K562 (cell line): ENCODE measurements at regions of chr9 and their contacts with region 1.

Region 1: DNA sequence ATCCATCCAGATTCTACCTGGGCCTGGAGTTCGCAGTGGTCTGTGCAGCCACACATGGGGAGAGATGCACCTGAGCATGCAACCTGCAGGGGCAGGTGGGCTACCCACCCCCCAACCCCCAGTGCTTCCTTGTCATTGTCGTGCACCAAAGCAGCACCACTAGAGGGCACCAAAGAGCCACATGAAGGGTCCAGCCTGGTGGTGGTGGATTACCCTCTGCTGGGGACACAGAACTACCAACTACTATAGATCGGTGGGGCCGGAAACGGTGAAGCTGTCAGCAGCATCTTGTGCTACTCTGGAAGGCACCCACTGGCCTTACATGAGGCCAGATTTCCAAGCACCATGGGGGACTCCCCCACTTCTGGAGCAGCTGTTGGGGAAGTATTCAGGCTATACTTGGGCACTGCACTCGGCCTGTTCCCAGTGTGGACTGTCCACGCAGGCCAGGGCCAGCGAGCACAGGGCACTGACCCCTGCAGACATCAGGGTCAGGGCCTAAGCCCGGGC is 60.2 kb upstream of the TBC1D2 start:
- DNase-seq: peak; percentile 91 to 95 (median 92)
- ATAC-seq: peak; percentile 87
- H3K4me3 ChIP-seq: no peak overlapping the region
- H3K27ac ChIP-seq: no peak overlapping the region; the same call in 2 of the 3 replicates
- H3K4me1 ChIP-seq: peaks cover 56 to 70% of the 10 kb centered on the region in 2 experiments
- H3K27me3 ChIP-seq: no peaks in the 10 kb centered on the region
- CTCF ChIP-seq: peak; percentile 98 to 99 (median 98)
- EP300 ChIP-seq: peak; percentile 52; the same call in 1 of the 2 replicates
- POLR2A ChIP-seq: no peak
- RAD21 ChIP-seq: peak; percentile 92 to 99

Region 2: GRCh38 chr9:98045234-98046179 is 270.1 kb before region 1 on chr9:
- CTCF ChIA-PET with region 1: no interaction called
- POLR2A ChIA-PET with region 1: no interaction called
- in situ Hi-C with region 1: no loop called
- intact Hi-C with region 1: no loop called
- DNase-seq: peak; percentile 50 to 90 (median 52)
- ATAC-seq: peak; percentile 87
- H3K4me3 ChIP-seq: peak overlapping the region; percentile 55
- H3K27ac ChIP-seq: peak overlapping the region; percentile 90
- H3K4me1 ChIP-seq: peaks cover 12 to 19% of the 10 kb centered on the region in 2 experiments; a peak in 3 of 5 replicates
- H3K27me3 ChIP-seq: no peaks in the 10 kb centered on the region
- CTCF ChIP-seq: peak; percentile 3 to 30 (median 23); a peak in 1 of 6 replicates
- EP300 ChIP-seq: no peak
- POLR2A ChIP-seq: peak; percentile 96
- RAD21 ChIP-seq: no peak

Region 3: DNA sequence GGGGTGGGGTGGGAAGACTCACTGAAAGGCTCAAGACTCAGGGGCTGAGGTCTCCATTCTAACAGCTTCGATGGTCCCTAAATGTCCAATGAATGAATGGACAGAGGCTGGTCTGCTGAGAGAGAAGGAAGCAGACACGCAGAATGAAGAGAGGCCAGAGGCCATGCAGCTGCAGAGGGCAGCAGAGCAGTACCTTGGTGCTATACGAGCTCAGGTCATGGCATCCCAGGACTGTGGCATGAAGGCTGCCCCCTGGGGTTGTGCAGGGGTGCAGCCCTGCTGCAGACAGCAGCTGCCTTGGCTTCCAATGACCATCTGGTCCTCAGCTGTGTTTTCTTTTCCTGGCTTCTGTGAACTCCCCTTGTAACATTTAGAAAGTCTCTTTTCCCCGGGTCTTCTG is 108.0 kb before region 1 on chr9:
- CTCF ChIA-PET with region 1: no interaction called
- POLR2A ChIA-PET with region 1: no interaction called
- in situ Hi-C with region 1: no loop called
- intact Hi-C with region 1: loop called (anchors 10 kb)
- DNase-seq: no peak
- ATAC-seq: no peak
- H3K4me3 ChIP-seq: no peak overlapping the region
- H3K27ac ChIP-seq: no peak overlapping the region
- H3K4me1 ChIP-seq: peaks cover 11 to 22% of the 10 kb centered on the region in 2 experiments; a peak in 4 of 5 replicates
- H3K27me3 ChIP-seq: no peaks in the 10 kb centered on the region
- CTCF ChIP-seq: peak; percentile 41 to 50 (median 43); a peak in 5 of 6 replicates
- EP300 ChIP-seq: no peak
- POLR2A ChIP-seq: no peak
- RAD21 ChIP-seq: peak in 1 of 2 experiments; percentile 42; a peak in 2 of 4 replicates

Region 4: DNA sequence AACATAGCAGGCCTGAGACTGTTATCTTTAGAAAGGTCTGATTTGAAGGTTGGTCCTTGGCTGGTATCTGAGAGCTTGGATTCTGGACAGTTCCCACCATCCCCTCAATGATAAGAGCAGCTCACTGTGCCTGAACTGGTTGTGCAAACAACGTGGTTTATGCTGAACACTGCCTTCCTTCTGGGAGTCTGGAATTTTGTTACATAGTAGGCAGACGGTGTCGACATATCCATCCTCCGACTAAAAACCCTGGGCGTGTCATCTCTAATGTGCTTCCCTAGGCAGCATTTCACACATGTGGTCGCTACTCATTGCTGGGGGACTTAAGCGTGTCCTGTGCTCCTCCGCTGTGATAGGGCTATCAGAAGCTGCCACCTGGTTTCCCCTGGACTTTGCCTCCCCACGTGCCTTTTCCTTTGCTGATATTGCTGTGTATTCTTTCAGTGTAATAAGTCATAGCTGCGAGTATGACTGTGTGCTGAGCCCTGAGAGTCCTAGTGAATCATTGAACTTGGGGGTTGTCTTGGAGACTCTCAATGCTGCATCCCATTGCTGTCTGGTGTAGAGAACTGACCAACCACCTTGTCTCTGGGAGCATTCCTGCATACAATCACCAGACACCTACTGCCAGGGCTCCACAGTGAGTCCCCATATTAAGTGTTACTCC is 58.9 kb after region 1 on chr9:
- CTCF ChIA-PET with region 1: no interaction called
- POLR2A ChIA-PET with region 1: no interaction called
- in situ Hi-C with region 1: no loop called
- intact Hi-C with region 1: loop called (anchors 2 kb)
- DNase-seq: peak; percentile 90 to 97 (median 92)
- ATAC-seq: peak; percentile 88
- H3K4me3 ChIP-seq: no peak overlapping the region
- H3K27ac ChIP-seq: peak overlapping the region; percentile 56
- H3K4me1 ChIP-seq: peaks cover 38 to 53% of the 10 kb centered on the region in 2 experiments; a peak in 4 of 5 replicates
- H3K27me3 ChIP-seq: no peaks in the 10 kb centered on the region
- CTCF ChIP-seq: 0 out of 6 replicates have a peak, but pooled peaks of 1 of the 3 experiments have one; percentile 7
- EP300 ChIP-seq: peak; percentile 94
- POLR2A ChIP-seq: 0 out of 2 replicates have a peak, but pooled peaks have one; percentile 31
- RAD21 ChIP-seq: peak in 1 of 2 experiments; percentile 18; a peak in 1 of 4 replicates

Region 5: GRCh38 chr9:98442114-98442513 is 126.5 kb after region 1 on chr9:
- CTCF ChIA-PET with region 1: no interaction called
- POLR2A ChIA-PET with region 1: no interaction called
- in situ Hi-C with region 1: no loop called
- intact Hi-C with region 1: loop called (anchors 1 kb)
- DNase-seq: peak in 3 of 4 experiments; percentile 15 to 65 (median 64)
- ATAC-seq: peak; percentile 88
- H3K4me3 ChIP-seq: no peak overlapping the region
- H3K27ac ChIP-seq: no peak overlapping the region
- H3K4me1 ChIP-seq: peaks cover 0 to 6% of the 10 kb centered on the region in 2 experiments; a peak in 3 of 5 replicates
- H3K27me3 ChIP-seq: peaks cover 0 to 2% of the 10 kb centered on the region in 2 experiments; a peak in 1 of 5 replicates
- CTCF ChIP-seq: peak in 2 of 3 experiments; percentile 25 to 46; a peak in 2 of 6 replicates
- EP300 ChIP-seq: no peak
- POLR2A ChIP-seq: no peak
- RAD21 ChIP-seq: peak in 1 of 2 experiments; percentile 56; a peak in 2 of 4 replicates

Region 6: DNA sequence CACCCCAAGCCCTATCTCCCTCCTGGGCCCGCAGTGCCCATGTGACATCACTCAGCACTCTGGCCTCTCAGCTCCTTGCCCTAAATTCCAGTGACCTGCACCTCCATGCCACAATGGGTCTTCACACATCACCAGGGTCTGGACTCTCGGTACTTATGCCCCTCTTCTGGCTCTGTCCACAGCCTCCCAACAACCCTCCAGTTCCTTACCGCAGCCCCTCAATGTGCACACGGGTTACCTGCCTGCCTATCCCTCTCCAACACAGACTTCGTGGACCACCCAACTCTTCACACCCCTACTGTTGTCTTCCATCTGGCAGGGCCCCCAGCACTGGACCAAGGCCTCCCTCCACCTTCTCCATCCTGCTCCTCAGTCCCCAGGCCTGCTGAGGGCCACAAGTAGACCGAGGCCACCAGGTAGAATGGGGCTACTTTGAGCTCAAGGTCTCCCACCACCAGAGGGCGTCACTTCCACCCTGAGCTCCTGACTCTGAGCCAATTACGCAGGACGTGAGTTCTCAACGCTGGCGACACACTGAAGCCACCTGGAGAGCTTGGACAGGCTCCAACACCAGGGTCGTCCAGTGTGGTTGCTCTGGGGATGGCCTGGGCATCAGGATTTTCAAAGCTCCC is 221.1 kb after region 1 on chr9:
- CTCF ChIA-PET with region 1: no interaction called
- POLR2A ChIA-PET with region 1: interaction called, 4 read pairs
- in situ Hi-C with region 1: loop called (anchors 25 kb)
- intact Hi-C with region 1: no loop called
- DNase-seq: peak; percentile 50 to 82 (median 62)
- ATAC-seq: peak; percentile 94
- H3K4me3 ChIP-seq: no peak overlapping the region
- H3K27ac ChIP-seq: no peak overlapping the region
- H3K4me1 ChIP-seq: peaks cover 2 to 3% of the 10 kb centered on the region in 2 experiments; a peak in 2 of 5 replicates
- H3K27me3 ChIP-seq: no peaks in the 10 kb centered on the region; a peak in 1 of 5 replicates
- CTCF ChIP-seq: peak; percentile 72 to 88 (median 77)
- EP300 ChIP-seq: no peak
- POLR2A ChIP-seq: no peak
- RAD21 ChIP-seq: peak; percentile 58 to 84; a peak in 3 of 4 replicates

Region 7: DNA sequence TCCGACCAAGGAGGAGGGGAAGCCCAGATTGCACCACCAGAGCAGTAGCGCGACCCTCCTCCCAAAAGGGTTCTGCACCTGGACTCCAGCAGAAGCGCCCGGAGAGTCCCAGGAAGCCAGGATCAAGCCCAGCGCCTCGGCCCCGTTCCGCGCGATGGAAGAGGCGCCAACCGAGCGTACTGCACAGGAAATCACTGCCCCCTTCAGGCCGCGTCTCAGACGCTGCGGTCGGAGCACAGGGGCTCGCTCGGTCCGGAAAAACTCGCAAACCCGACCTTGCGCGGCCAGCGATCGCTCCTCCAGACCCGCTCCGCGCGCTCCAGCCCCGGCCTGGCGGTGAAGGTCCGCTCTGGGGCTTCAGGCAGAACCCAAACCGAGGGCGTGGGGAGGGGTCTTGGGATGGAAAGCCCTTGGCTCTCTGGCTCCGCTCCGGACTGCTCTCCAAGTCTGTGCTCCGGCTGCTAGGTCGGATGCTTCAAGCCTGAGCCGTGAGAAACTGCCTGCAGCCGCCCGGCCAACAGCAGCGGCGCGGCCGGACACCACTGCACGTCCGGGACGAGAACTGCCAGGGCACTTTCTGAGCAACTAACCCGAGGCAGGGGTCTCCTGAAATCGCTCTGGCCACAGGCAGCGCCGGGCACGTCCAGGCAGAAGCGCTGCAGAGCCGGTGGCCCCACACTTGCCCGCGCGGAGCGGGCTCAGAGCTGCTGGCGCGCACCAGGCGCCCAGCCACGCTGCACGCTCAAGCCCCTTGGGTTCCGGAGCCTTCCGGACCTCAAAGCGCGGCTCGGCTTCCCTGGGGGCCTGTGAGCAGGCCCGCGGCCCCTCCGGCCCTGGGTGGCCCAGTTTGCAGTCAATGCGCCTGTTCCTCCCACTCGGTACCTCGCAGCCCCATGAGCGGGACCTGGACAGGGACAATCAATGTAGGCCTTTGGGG is 391.8 kb after region 1 on chr9:
- CTCF ChIA-PET with region 1: interaction called, 4 read pairs
- POLR2A ChIA-PET with region 1: no interaction called
- in situ Hi-C with region 1: loop called (anchors 5 kb)
- intact Hi-C with region 1: loop called (anchors 2 kb)
- DNase-seq: peak; percentile 51 to 83 (median 62)
- ATAC-seq: peak; percentile 93
- H3K4me3 ChIP-seq: no peak overlapping the region
- H3K27ac ChIP-seq: no peak overlapping the region
- H3K4me1 ChIP-seq: peaks cover 0 to 31% of the 10 kb centered on the region in 2 experiments; a peak in 3 of 5 replicates
- H3K27me3 ChIP-seq: peaks cover 17 to 51% of the 10 kb centered on the region in 2 experiments
- CTCF ChIP-seq: peak; percentile 69 to 80 (median 74)
- EP300 ChIP-seq: no peak
- POLR2A ChIP-seq: no peak
- RAD21 ChIP-seq: peak; percentile 64 to 84